ENCODE measurements at regions of chr18 and their contacts with region 1.

Region 1: GRCh38 chr18:62425465-62426195 is 97.2 kb upstream of the ZCCHC2 start:
- DNase-seq: peak; percentile 64
- H3K4me3 Mint-ChIP-seq: no peak overlapping the region
- H3K27ac Mint-ChIP-seq: peak overlapping the region; percentile 16
- H3K4me1 Mint-ChIP-seq: peaks cover 47% of the 10 kb centered on the region
- H3K27me3 Mint-ChIP-seq: no peaks in the 10 kb centered on the region

Region 2: DNA sequence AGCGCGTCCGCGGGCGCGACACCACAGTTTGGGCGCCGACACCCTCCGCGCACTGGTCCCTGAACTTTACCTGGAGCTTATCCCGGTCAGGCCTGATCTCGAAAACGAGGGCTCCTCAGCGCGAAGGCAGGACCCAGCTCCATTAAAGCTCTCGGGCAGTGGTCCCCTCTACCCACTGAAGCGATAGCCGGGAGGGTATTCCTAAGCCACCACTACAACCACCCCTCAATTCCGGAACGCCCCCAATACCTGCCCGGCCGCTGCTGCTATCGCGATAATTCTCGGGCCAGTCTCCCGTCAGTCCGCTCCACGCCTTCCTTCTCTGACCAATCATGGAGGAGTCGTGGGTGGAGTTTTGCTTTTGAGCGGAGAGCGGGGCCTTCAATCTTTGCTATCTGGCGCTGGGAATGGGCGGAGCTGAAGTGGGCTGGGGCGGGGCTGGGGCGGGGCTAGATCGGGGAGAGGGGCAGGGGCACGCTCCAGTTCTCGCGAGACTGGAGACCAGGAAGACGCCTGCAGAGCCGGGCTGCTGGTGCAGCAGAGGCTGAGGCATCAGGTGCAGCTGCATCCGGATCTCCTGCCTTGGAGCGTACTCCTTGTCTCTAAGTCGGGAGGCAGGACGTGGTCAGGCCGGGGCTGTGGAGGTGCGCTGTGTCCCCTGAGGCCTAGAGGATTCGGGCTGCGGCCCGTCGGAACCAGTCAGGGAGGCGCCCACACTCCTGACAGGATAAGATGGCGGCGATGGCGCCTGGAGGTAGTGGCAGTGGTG is 238.7 kb before region 1 on chr18 and contains the starts of genes PIGN and RELCH:
- CTCF ChIA-PET with region 1: interaction called, 10 read pairs
- POLR2A ChIA-PET with region 1: interaction called, 33 read pairs
- DNase-seq: peak; percentile 96
- H3K4me3 Mint-ChIP-seq: peak within 1 kb of the TSS; percentile 96
- H3K27ac Mint-ChIP-seq: peak within 1 kb of the TSS; percentile 90
- H3K4me1 Mint-ChIP-seq: peaks cover 54% of the 10 kb centered on the region
- H3K27me3 Mint-ChIP-seq: no peaks in the 10 kb centered on the region
- total RNA-seq, gene PIGN: 27.2 to 29.7 TPM
- total RNA-seq, gene RELCH: 34.8 to 38.6 TPM

Region 3: GRCh38 chr18:62339106-62339988 is 86.3 kb before region 1 on chr18:
- CTCF ChIA-PET with region 1: interaction called, 6 read pairs
- POLR2A ChIA-PET with region 1: interaction called, 11 read pairs
- DNase-seq: peak; percentile 45
- H3K4me3 Mint-ChIP-seq: peak overlapping the region; percentile 46
- H3K27ac Mint-ChIP-seq: peak overlapping the region; percentile 84
- H3K4me1 Mint-ChIP-seq: peaks cover 59% of the 10 kb centered on the region
- H3K27me3 Mint-ChIP-seq: no peaks in the 10 kb centered on the region

Region 4: GRCh38 chr18:62399781-62400308 is 25.8 kb before region 1 on chr18:
- CTCF ChIA-PET with region 1: interaction called, 8 read pairs
- POLR2A ChIA-PET with region 1: interaction called, 12 read pairs
- DNase-seq: no peak
- H3K4me3 Mint-ChIP-seq: no peak overlapping the region
- H3K27ac Mint-ChIP-seq: peak overlapping the region; percentile 21
- H3K4me1 Mint-ChIP-seq: peaks cover 54% of the 10 kb centered on the region
- H3K27me3 Mint-ChIP-seq: no peaks in the 10 kb centered on the region

Region 5: DNA sequence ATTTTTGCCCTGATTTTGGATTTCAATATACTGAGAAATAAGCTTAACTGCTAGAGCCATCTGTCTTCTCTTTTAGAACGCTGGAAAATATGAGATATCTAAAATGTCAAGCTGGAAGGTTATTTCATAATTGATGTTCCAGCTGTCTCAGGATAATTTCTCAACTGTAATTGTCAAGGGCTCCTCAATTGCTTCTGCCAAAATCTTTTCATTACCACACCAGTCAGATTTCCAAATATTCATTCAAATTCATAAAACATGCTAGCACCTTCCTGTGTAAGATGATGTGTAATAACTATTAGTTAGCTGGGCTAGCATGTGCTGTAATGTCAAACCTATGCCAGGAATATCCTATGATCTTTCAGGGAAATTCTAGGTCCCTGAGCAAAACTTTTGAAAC is 12.4 kb before region 1 on chr18:
- CTCF ChIA-PET with region 1: interaction called, 14 read pairs
- POLR2A ChIA-PET with region 1: interaction called, 15 read pairs
- DNase-seq: no peak
- H3K4me3 Mint-ChIP-seq: no peak overlapping the region
- H3K27ac Mint-ChIP-seq: no peak overlapping the region
- H3K4me1 Mint-ChIP-seq: peaks cover 14% of the 10 kb centered on the region
- H3K27me3 Mint-ChIP-seq: peaks cover 6% of the 10 kb centered on the region

Region 6: GRCh38 chr18:62464266-62464665 is 38.6 kb after region 1 on chr18:
- CTCF ChIA-PET with region 1: no interaction called
- POLR2A ChIA-PET with region 1: no interaction called
- DNase-seq: no peak
- H3K4me3 Mint-ChIP-seq: no peak overlapping the region
- H3K27ac Mint-ChIP-seq: no peak overlapping the region
- H3K4me1 Mint-ChIP-seq: no peaks in the 10 kb centered on the region
- H3K27me3 Mint-ChIP-seq: peaks cover 14% of the 10 kb centered on the region

Region 7: GRCh38 chr18:62522504-62523254 is 97.0 kb after region 1 on chr18 and contains the start of gene ZCCHC2:
- CTCF ChIA-PET with region 1: interaction called, 9 read pairs
- POLR2A ChIA-PET with region 1: interaction called, 15 read pairs
- DNase-seq: peak; percentile 99
- H3K4me3 Mint-ChIP-seq: peak within 1 kb of the TSS; percentile 93
- H3K27ac Mint-ChIP-seq: peak within 1 kb of the TSS; percentile 96
- H3K4me1 Mint-ChIP-seq: peaks cover 21% of the 10 kb centered on the region
- H3K27me3 Mint-ChIP-seq: no peaks in the 10 kb centered on the region
- total RNA-seq, gene ZCCHC2: 51.7 to 52.3 TPM

Region 8: DNA sequence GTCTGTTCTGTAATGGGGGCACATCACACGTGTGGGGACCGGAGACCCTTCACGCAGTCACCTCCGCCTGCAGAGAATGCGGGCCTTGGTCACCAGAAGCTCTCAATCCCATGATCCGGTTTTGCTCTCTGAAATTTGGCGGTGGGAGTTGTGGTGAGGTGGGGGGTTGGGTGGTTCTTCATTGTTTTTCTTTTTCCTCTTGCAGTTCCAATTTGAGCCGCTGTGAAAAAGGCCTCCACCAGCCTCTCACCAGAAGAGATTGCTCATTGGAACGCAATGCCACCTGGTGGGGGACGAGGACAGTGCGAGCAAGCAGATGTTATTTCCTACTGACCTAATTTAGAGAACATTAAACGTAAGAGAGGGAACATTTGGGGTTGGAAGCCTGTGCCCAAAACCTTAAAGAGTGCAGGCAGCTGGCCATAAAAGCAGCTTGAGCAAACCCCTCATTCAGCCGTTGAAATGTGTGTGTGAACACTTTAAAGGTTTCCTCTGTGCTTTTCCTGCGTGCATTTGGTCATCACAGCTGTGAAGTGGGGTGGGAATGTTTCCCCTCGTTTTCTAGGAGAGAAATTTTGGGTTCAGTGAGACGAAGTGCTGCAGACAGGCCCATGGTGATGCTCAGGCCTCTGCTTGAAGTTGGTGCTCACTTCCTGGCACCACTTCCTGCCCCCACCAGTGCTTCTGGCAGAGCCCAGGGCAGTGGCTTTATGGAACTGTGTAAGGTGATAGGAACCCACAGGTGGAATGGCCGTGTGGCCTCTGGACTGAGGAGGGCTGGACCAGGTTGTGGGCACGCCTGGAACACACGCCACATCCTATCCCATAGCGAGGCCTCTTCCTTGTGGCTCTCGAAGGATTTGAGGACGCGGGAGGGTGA is 158.9 kb after region 1 on chr18:
- CTCF ChIA-PET with region 1: interaction called, 23 read pairs
- POLR2A ChIA-PET with region 1: interaction called, 3 read pairs
- DNase-seq: peak; percentile 85
- H3K4me3 Mint-ChIP-seq: peak overlapping the region; percentile 12
- H3K27ac Mint-ChIP-seq: peak overlapping the region; percentile 89
- H3K4me1 Mint-ChIP-seq: peaks cover 48% of the 10 kb centered on the region
- H3K27me3 Mint-ChIP-seq: no peaks in the 10 kb centered on the region